ENCODE measurements at regions of chr5 and their contacts with region 1.

Region 1: DNA sequence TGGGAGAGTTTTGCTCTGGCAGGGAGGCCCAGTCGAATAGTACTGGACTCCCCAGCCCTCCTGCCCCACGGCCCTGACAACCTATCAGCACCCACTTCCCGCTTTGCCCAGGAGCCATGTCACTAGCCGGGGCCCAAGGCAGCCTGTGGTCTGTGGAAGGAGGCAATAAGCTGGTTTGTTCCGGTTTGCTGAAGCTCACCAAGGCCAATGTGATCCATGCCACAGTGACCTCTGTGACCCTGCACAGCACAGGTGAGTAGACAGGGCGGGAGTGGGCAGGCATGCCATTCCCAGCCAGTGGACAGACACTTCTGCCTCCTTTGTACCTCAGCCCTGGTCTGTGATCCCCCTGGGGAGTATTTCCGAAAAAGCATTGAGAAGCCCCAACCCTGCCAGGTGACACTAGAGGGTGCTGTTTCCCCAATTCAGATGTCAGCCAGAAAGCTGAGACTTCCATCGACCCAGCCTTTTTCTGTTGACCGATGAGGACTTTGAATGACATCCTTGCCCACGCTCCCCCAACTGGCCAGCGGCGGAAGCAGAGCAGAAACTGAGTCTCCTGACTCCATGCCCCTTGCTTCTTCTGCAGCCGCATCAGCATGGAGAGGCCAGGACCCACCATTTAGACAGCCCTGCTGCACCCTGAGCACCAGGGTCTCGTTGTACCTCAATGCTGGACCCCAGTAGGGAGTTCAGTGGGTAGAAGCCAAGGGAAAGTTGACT is 9.6 kb downstream of the PCYOX1L start:
- DNase-seq: no peak
- ATAC-seq: peak; percentile 93
- H3K4me3 ChIP-seq: no peak overlapping the region
- H3K27ac ChIP-seq: no peak overlapping the region
- H3K4me1 ChIP-seq: no peaks in the 10 kb centered on the region
- H3K27me3 ChIP-seq: no peaks in the 10 kb centered on the region
- CTCF ChIP-seq: peak; percentile 83 to 84 (median 83)
- EP300 ChIP-seq: no peak
- POLR2A ChIP-seq: no peak
- RAD21 ChIP-seq: peak; percentile 59

Region 2: GRCh38 chr5:149317281-149318048 is 49.9 kb before region 1 on chr5:
- CTCF ChIA-PET with region 1: interaction called, 118 read pairs
- POLR2A ChIA-PET with region 1: no interaction called
- RAD21 ChIA-PET with region 1: interaction called, 9 read pairs
- SMC1A ChIA-PET with region 1: interaction called, 15 read pairs
- in situ Hi-C with region 1: no loop called
- intact Hi-C with region 1: loop called (anchors 1 kb)
- DNase-seq: no peak
- ATAC-seq: peak; percentile 86
- H3K4me3 ChIP-seq: no peak overlapping the region
- H3K27ac ChIP-seq: no peak overlapping the region
- H3K4me1 ChIP-seq: no peaks in the 10 kb centered on the region
- H3K27me3 ChIP-seq: no peaks in the 10 kb centered on the region; a peak in 1 of 4 replicates
- CTCF ChIP-seq: peak; percentile 67 to 82 (median 72)
- EP300 ChIP-seq: no peak
- POLR2A ChIP-seq: no peak
- RAD21 ChIP-seq: peak; percentile 79

Region 3: DNA sequence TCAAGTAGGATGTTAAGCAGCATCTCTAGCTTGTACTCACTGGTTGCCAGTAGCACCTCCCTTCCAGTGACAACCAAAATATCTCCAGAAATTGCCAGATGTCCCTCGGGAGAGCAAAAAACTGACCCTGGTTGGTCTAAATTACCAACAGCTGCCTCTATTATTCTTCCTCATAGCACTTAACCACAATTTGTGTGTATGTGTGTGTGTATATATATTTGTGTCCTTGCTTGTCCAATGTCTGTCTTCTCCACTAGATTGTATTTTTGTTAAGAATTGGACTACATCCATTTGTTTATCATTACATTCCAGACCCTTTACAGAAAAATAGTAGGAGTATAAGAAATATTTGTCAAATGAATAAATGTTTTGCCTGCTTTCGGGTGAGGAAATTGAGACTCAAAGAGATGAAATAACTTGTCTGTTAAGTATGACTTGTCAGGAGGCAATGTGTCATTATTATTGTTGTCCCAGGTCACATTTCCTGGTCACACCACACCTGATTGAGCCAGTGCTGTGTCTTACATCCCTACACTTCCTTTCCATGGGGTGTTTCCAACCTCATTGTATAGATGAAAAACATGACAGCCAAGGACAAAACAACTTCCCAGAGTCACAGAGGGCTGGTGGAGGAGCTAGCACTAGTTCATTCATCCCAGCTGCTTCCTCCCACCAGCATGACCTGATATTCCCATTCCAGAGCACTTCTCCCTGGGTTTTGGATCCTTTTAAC is 33.5 kb before region 1 on chr5:
- CTCF ChIA-PET with region 1: interaction called, 11 read pairs
- POLR2A ChIA-PET with region 1: no interaction called
- RAD21 ChIA-PET with region 1: no interaction called
- SMC1A ChIA-PET with region 1: no interaction called
- in situ Hi-C with region 1: no loop called
- intact Hi-C with region 1: no loop called
- DNase-seq: no peak
- ATAC-seq: no peak
- H3K4me3 ChIP-seq: no peak overlapping the region
- H3K27ac ChIP-seq: no peak overlapping the region
- H3K4me1 ChIP-seq: no peaks in the 10 kb centered on the region
- H3K27me3 ChIP-seq: peaks cover 1 to 2% of the 10 kb centered on the region in 2 experiments; a peak in 2 of 4 replicates
- CTCF ChIP-seq: no peak
- EP300 ChIP-seq: no peak
- POLR2A ChIP-seq: no peak
- RAD21 ChIP-seq: no peak

Region 4: GRCh38 chr5:149381987-149382340 is 14.6 kb after region 1 on chr5:
- CTCF ChIA-PET with region 1: interaction called, 25 read pairs
- POLR2A ChIA-PET with region 1: no interaction called
- RAD21 ChIA-PET with region 1: no interaction called
- SMC1A ChIA-PET with region 1: interaction called, 3 read pairs
- in situ Hi-C with region 1: no loop called
- intact Hi-C with region 1: no loop called
- DNase-seq: no peak
- ATAC-seq: peak; percentile 97
- H3K4me3 ChIP-seq: no peak overlapping the region
- H3K27ac ChIP-seq: no peak overlapping the region
- H3K4me1 ChIP-seq: no peaks in the 10 kb centered on the region
- H3K27me3 ChIP-seq: peaks cover 0 to 2% of the 10 kb centered on the region in 2 experiments; a peak in 2 of 4 replicates
- CTCF ChIP-seq: peak; percentile 83 to 90 (median 87)
- EP300 ChIP-seq: no peak
- POLR2A ChIP-seq: no peak
- RAD21 ChIP-seq: peak; percentile 69

Region 5: DNA sequence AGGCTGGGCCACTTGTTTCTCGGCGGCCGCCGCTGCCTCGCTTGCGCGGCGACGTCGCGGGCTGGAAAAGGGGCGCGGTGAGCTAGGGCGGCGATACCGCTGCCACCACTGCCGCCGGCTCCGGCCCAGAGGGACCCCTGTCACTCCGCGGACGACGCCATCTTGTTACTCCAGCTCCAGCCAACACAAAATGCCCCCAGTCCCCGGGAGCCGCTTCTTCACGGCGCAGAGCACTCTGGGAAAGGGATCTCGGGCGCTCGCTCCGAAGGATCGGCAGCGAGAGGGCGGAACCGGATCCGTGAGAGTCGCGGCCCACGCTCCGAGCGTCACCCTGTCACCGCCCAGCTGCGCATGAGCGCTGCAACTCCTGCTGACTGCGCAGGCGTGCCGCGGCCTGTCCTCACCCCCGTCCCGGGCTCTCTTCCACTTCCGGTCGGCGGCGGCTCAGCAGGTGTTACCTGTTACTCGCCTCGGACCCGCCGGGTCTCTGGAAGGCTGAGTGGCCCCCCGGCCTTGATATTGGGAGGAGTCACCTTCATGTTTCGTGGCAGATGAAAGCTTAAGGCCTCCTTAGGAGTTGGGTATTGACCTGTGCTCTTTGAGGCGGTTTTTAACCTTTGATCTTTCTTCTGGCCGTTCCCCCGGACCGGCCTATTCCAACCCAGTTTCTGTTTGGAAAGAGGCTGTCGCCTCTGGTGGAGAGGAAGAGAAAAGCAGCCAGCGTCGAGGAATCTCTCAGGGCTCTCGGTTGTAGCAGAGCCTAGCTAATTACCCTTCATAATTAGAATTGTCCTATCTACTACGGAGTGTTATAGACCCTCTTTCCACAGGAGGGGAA is 184.0 kb after region 1 on chr5 and contains the start of gene CSNK1A1:
- CTCF ChIA-PET with region 1: interaction called, 4 read pairs
- POLR2A ChIA-PET with region 1: no interaction called
- RAD21 ChIA-PET with region 1: no interaction called
- SMC1A ChIA-PET with region 1: no interaction called
- in situ Hi-C with region 1: loop called (anchors 5 kb)
- intact Hi-C with region 1: no loop called
- DNase-seq: peak; percentile 98
- ATAC-seq: peak; percentile 91
- H3K4me3 ChIP-seq: peak within 1 kb of the TSS; percentile 82
- H3K27ac ChIP-seq: peak within 1 kb of the TSS; percentile 100
- H3K4me1 ChIP-seq: no peaks in the 10 kb centered on the region; the same call in 1 of the 2 replicates
- H3K27me3 ChIP-seq: no peaks in the 10 kb centered on the region
- CTCF ChIP-seq: peak; percentile 58 to 77 (median 69)
- EP300 ChIP-seq: 0 out of 4 replicates have a peak, but pooled peaks of 1 of the 2 experiments have one; percentile 23
- POLR2A ChIP-seq: peak; percentile 94
- RAD21 ChIP-seq: peak; percentile 51
- polyA plus RNA-seq, gene CSNK1A1: 53.3 to 62.0 TPM